GM23248 (cell line): ENCODE measurements at regions of chr22 and their contacts with region 1.

Region 1: DNA sequence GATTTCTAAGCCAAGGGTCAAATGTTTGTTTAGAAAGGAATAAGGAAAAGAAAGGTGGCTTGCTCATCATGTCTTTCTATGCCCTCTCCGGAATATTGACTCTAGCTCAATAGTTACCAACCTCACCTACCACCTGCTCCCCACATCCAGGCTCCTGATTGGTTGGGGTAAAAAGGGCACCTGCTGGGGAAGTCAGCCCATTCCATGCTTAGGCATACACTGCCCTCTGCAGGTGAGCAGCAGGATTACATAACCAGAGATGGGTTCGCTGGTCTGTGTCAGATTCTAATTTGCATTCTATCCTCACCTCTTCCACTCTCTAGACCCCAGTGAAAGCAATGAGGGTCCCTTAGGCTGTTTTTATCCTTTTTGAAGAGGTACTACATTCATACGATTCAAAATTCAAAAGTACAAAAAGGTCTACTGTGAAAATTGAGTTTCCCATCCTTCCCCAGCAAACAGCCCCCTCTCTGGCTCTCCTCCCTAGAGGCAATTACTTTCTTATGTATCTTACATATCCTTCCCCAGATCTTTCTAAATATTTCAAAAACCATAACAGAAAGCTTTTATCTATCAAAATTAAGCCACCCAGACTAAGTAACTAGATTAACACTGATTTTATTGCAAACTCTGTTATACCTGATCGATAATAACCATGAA is 98.0 kb upstream of the ASPHD2 start:
- DNase-seq: peak; percentile 60
- H3K4me3 ChIP-seq: no peak overlapping the region
- H3K27ac ChIP-seq: no peak overlapping the region
- H3K4me1 ChIP-seq: no peaks in the 10 kb centered on the region
- H3K27me3 ChIP-seq: peaks cover 18% of the 10 kb centered on the region

Region 2: DNA sequence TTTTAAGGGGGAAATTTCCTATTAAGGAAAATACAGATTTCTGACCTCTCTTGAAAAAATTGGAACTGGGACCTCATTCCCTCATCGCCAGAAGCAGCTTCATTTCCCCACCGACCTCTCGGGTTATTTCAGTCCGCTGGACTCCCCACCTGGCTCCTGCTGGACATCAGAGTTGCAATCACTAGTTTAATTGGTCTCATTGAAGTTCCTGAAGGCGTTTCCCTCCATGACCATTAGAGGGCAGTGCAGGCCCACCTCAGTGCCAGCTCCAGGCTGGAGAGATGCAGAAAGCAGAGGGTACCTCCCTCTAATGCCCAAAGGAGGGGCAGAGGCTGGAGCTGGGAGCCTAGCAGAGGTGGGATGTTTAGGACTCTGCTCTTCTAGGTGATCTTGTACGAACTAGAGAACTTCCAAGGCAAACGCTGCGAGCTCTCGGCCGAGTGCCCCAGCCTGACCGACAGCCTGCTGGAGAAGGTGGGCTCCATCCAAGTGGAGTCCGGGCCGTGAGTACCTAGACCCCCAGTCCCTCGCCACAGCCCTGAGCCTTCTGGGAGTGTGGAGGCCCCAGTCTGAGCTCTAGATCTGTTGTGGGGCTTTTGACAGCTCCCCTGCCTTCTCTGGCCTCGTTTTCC is 1128.7 kb before region 1 on chr22:
- in situ Hi-C with region 1: loop called (anchors 25 kb)
- DNase-seq: peak; percentile 63
- H3K4me3 ChIP-seq: no peak overlapping the region
- H3K27ac ChIP-seq: no peak overlapping the region
- H3K4me1 ChIP-seq: no peaks in the 10 kb centered on the region
- H3K27me3 ChIP-seq: peaks cover 5% of the 10 kb centered on the region; the same call in 1 of the 2 replicates

Region 3: GRCh38 chr22:26516503-26516902 is 185.4 kb after region 1 on chr22:
- in situ Hi-C with region 1: no loop called
- DNase-seq: no peak
- H3K4me3 ChIP-seq: no peak overlapping the region
- H3K27ac ChIP-seq: no peak overlapping the region
- H3K4me1 ChIP-seq: peaks cover 8% of the 10 kb centered on the region
- H3K27me3 ChIP-seq: no peaks in the 10 kb centered on the region